ENCODE measurements at regions of chr16 and their contacts with region 1.

Region 1: DNA sequence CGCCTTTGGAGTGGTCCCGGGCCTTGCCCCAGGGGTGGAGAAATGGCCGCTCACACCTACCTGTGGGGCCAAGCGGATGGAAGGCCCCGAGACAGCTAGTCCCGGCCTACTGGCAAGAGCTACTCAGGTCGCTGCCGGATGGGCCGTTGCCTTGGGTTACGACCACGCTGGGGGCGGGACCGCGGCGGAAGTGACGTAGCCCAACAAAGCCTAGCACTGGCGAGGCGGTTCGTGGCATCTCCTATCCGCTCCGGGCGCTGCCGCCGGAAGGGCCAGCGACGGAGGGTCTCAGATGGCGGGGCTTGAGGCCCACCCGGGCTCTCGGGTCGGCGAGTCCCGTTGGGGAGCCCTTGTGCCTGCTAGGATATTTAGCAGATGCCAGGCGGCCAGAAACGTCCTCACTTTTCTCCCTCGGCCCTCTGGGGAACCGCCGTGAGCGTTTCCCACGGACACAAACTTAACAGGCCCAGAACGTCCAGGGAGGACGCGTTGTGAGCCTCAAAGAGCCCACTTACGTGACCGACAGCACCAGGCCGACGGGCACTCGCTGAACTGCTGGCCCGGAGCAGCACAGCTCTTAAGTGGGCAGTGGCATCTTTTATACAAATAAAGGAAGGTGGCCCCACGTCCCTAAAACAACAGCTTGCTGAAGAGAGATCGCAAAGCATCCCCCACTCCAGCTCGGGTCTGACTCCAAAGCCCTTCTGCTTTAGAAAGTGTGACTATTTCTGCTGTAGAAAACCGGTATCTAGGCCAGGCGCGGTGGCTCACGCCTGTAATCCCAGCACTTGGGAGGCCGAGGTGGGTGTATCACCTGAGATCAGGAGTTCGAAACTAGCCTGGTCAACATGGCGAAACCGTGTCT is at the start of gene C16orf46:
- DNase-seq: peak; percentile 97
- H3K4me3 ChIP-seq: peak within 1 kb of the TSS; percentile 48 to 52 (median 49)
- H3K27ac ChIP-seq: peak within 1 kb of the TSS; percentile 91
- H3K4me1 ChIP-seq: peaks cover 7% of the 10 kb centered on the region
- H3K27me3 ChIP-seq: no peaks in the 10 kb centered on the region
- CTCF ChIP-seq: no peak
- POLR2A ChIP-seq: peak; percentile 80
- total RNA-seq, gene C16orf46: 0.53 TPM in 1 of 2 replicates, not detected in the other

Region 2: GRCh38 chr16:81006814-81007696 is 70.3 kb before region 1 on chr16 and contains the starts of genes CENPN and CMC2:
- CTCF ChIA-PET with region 1: no interaction called
- POLR2A ChIA-PET with region 1: no interaction called
- dilution Hi-C with region 1: no loop called
- intact Hi-C with region 1: loop called (anchors 1 kb)
- DNase-seq: peak; percentile 99
- H3K4me3 ChIP-seq: peak within 1 kb of the TSS; percentile 72 to 87 (median 83)
- H3K27ac ChIP-seq: peak within 1 kb of the TSS; percentile 80
- H3K4me1 ChIP-seq: peaks cover 19% of the 10 kb centered on the region
- H3K27me3 ChIP-seq: no peaks in the 10 kb centered on the region
- CTCF ChIP-seq: peak in 1 of 2 donors; percentile 1
- POLR2A ChIP-seq: peak; percentile 84
- total RNA-seq, gene CENPN: 52.4 and 53.4 TPM in 2 replicates
- total RNA-seq, gene CMC2: 96.6 and 97.8 TPM in 2 replicates

Region 3: GRCh38 chr16:81384006-81384405 is 306.7 kb after region 1 on chr16:
- CTCF ChIA-PET with region 1: no interaction called
- POLR2A ChIA-PET with region 1: no interaction called
- dilution Hi-C with region 1: no loop called
- intact Hi-C with region 1: no loop called
- DNase-seq: peak; percentile 95
- H3K4me3 ChIP-seq: no peak overlapping the region
- H3K27ac ChIP-seq: peak overlapping the region; percentile 97
- H3K4me1 ChIP-seq: peaks cover 35% of the 10 kb centered on the region
- H3K27me3 ChIP-seq: no peaks in the 10 kb centered on the region
- CTCF ChIP-seq: no peak
- POLR2A ChIP-seq: no peak